ENCODE measurements at regions of chr10 and their contacts with region 1.

Region 1: DNA sequence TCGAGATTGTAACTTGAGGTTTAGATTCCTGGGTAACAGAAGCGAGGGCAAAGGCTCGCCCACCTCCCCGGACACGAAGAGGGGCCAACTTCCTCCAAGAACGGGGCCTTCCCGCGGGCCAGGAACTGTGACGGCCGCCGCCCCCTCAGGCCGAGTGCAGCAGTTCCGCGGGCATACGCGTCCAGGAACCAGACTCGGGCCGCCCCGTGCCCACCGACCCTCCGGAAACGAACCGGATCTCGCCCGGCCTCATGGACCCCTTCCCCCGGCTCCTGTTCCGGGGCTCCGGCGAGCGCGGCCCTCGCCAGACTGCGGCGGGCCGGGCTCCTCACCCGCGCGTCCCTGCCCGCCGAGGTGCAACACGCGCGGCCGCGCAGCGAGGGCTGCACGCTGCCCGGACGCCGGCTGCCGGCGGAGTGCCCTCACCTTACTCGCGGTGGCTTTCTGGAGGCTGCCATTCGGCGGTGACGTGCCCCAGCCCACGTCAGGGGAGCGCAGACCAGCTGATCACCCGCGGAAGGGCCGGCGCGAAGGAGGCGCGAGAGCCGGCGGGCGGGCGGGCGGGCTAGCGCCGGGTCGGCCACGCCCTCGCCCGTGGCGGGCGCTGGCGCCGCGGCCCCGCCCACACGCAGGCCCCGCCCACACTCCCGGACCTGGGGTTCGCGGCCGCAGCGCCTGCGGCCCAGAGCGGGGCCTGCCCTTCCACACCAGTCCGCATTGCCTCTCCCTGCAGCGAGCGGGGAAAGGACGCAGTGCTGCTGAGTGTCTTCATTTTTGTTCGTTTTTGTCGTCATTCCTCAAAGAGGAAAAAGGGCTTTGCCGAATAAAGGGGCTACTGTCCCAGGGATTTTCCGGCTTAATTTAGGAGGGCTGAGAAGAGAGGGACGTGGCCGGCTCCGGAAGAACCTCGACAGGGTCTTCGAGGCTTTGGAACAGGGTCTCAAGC is at the start of gene XPNPEP1:
- DNase-seq: peak; percentile 85
- ATAC-seq: peak; percentile 94
- H3K4me3 Mint-ChIP-seq: peak within 1 kb of the TSS; percentile 88
- H3K27ac Mint-ChIP-seq: peak within 1 kb of the TSS; percentile 81
- H3K4me1 Mint-ChIP-seq: peaks cover 36% of the 10 kb centered on the region
- H3K27me3 Mint-ChIP-seq: peaks cover 2% of the 10 kb centered on the region
- CTCF ChIP-seq: no peak
- total RNA-seq, gene XPNPEP1: 53.5 and 70.6 TPM in 2 replicates

Region 2: GRCh38 chr10:109956454-109957091 is 33.3 kb after region 1 on chr10:
- CTCF ChIA-PET with region 1: no interaction called
- POLR2A ChIA-PET with region 1: no interaction called
- intact Hi-C with region 1: loop called (anchors 2 kb)
- DNase-seq: no peak
- ATAC-seq: peak; percentile 79
- H3K4me3 Mint-ChIP-seq: peak overlapping the region; percentile 22
- H3K27ac Mint-ChIP-seq: peak overlapping the region; percentile 13
- H3K4me1 Mint-ChIP-seq: peaks cover 15% of the 10 kb centered on the region
- H3K27me3 Mint-ChIP-seq: no peaks in the 10 kb centered on the region
- CTCF ChIP-seq: peak; percentile 50

Region 3: GRCh38 chr10:109987452-109988211 is 64.4 kb after region 1 on chr10:
- CTCF ChIA-PET with region 1: no interaction called
- POLR2A ChIA-PET with region 1: no interaction called
- intact Hi-C with region 1: no loop called
- DNase-seq: no peak
- ATAC-seq: no peak
- H3K4me3 Mint-ChIP-seq: no peak overlapping the region
- H3K27ac Mint-ChIP-seq: no peak overlapping the region
- H3K4me1 Mint-ChIP-seq: peaks cover 4% of the 10 kb centered on the region
- H3K27me3 Mint-ChIP-seq: no peaks in the 10 kb centered on the region
- CTCF ChIP-seq: no peak

Region 4: GRCh38 chr10:110932505-110933180 is 1009.4 kb after region 1 on chr10:
- CTCF ChIA-PET with region 1: no interaction called
- POLR2A ChIA-PET with region 1: interaction called, 20 read pairs
- intact Hi-C with region 1: no loop called
- DNase-seq: no peak
- ATAC-seq: no peak
- H3K4me3 Mint-ChIP-seq: no peak overlapping the region
- H3K27ac Mint-ChIP-seq: no peak overlapping the region
- H3K4me1 Mint-ChIP-seq: peaks cover 37% of the 10 kb centered on the region
- H3K27me3 Mint-ChIP-seq: no peaks in the 10 kb centered on the region
- CTCF ChIP-seq: no peak

Measured in activated B cell treated with CpG ODN at 0.5 μM for 24 hours (primary cell).